Endothelial cell of umbilical vein (primary cell): ENCODE measurements at regions of chr14 and their contacts with region 1.

Region 1: DNA sequence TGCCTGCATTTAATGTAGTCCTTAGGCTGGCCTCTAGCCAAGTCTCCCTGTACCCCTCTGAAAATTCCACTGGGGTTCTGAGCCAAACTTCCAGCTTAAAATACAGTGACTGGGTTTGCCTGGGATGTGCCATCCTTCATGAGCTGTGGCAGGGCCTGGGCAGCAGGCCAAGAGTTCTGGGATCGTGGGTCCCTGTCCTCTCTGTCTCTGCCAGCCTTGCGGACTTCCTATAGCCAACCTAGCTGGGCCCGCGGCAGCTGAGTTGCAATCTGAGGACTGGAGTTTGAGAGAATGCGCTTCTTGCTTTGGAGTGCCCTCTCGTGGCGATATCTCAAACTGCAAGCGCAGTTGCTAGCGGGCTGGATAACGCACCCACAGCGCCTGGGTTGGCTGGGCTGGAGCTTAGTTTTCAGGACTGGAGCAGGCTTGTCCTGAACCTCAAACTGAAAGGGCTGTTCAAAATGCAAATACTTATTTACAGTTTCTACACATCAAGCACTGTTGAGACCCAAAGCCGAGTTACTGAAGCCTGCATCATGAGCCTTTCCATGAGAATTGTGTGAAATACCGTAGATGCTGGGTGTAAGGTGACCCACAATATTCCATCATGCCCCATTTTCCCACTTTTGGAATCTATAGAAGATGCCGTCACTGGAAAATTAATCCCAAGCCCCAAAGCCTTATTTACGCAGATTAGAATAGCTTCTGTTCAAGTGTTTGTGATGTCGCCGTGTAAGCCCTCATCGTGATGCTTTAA is 7.3 kb upstream of the IFI27L2 start:
- DNase-seq: peak; percentile 80
- H3K4me3 ChIP-seq: no peak overlapping the region
- H3K27ac ChIP-seq: no peak overlapping the region
- H3K4me1 ChIP-seq: no peaks in the 10 kb centered on the region
- H3K27me3 ChIP-seq: peaks cover 3 to 11% of the 10 kb centered on the region in 2 experiments
- CTCF ChIP-seq: peak; percentile 95 to 96
- POLR2A ChIP-seq: no peak

Region 2: DNA sequence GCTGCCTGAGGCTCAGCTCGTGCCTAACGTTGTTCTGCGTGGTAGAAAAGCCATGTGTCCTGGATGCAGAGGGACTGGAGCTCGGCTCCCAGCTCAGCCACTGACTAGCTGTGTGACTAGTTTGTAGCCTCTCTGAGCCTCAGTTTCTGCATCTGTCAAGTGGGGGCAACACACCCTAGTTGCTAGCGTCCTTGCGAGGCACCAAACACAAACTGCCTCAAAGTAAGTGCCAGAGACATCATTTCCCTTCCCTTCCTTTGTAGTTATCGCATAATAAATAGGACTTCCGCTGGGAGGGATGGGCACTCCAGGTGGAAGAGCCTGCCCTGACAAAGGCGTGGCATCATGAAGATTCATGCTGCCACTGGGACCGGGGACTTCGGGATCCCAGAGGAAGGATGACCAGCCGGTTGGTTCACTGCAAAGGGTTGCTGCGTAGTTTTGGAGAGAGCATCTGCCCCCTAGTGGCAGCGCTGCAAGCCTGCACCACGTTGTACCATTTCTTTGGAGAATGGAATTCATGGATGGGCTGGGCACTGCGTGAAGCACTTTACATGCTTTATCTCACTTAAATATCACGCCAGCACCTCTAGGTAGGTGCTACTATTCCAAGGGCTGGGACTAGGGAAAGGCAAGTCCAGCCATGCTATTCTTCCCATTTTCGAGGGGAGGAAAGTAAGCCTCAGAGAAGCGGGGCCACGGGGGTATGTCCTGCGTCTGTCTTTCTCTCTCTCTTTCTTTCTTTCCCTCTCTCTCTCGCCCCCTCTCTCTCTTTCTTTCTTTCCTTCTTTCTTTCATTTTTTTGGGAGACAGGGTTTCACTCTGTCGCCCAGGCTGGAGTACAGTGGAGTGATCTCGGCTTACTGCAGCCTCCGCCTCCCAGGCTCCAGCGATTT is 135.0 kb before region 1 on chr14:
- CTCF ChIA-PET with region 1: interaction called, 8 read pairs
- POLR2A ChIA-PET with region 1: no interaction called
- dilution Hi-C with region 1: no loop called
- intact Hi-C with region 1: loop called (anchors 1 kb)
- DNase-seq: peak; percentile 49
- H3K4me3 ChIP-seq: no peak overlapping the region
- H3K27ac ChIP-seq: no peak overlapping the region
- H3K4me1 ChIP-seq: no peaks in the 10 kb centered on the region
- H3K27me3 ChIP-seq: no peaks in the 10 kb centered on the region
- CTCF ChIP-seq: peak; percentile 93 to 96
- POLR2A ChIP-seq: no peak

Region 3: DNA sequence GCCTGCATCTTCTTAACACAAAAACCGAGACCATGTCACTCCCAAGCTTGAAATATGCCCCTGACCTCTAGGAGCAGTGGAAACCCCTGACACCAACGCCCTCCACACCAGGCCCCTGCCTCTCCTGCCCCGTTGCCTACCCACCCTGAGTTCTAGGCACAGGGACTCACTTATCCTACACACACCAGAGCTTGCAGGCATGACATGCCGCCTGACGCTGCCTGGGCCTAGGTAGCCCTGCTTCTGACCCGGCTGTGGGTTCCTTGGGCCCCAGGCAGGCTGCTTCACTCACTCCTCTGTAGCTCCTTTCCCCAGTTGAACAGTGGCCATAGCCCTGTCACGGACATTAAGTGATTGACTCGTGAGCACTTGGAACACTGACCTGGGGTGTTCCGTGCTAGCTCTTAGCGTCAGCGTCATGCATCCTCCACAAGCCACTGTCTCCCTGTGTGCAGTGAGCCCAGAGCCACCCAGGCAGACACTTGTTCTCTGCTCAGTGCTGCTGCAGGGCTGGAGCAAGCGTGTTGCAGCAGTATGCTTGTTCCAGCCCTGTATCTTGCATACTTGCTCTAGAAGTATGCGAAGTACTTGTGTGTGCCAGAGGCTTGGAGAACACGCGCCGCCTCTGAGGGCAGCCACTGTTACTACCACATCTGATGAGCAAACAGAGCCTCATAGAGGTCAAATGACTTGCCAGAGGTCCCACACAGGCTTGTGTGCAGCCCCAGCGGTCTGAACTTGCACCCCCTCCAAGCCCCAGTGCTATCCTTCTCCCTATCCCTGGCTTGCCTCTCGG is 95.0 kb before region 1 on chr14:
- CTCF ChIA-PET with region 1: interaction called, 347 read pairs
- POLR2A ChIA-PET with region 1: no interaction called
- dilution Hi-C with region 1: no loop called
- intact Hi-C with region 1: loop called (anchors 1 kb)
- DNase-seq: no peak
- H3K4me3 ChIP-seq: no peak overlapping the region
- H3K27ac ChIP-seq: no peak overlapping the region
- H3K4me1 ChIP-seq: no peaks in the 10 kb centered on the region
- H3K27me3 ChIP-seq: no peaks in the 10 kb centered on the region
- CTCF ChIP-seq: no peak
- POLR2A ChIP-seq: no peak

Region 4: GRCh38 chr14:94080471-94081289 is 56.1 kb before region 1 on chr14 and contains the start of gene DDX24:
- CTCF ChIA-PET with region 1: interaction called, 15 read pairs
- POLR2A ChIA-PET with region 1: interaction called, 4 read pairs
- dilution Hi-C with region 1: no loop called
- intact Hi-C with region 1: loop called (anchors 1 kb)
- DNase-seq: peak; percentile 97
- H3K4me3 ChIP-seq: peak within 1 kb of the TSS; percentile 67 to 88 (median 82)
- H3K27ac ChIP-seq: peak within 1 kb of the TSS; percentile 80
- H3K4me1 ChIP-seq: peaks cover 29% of the 10 kb centered on the region
- H3K27me3 ChIP-seq: no peaks in the 10 kb centered on the region
- CTCF ChIP-seq: no peak
- POLR2A ChIP-seq: peak; percentile 95
- total RNA-seq, gene DDX24: 132 and 141 TPM in 2 replicates

Region 5: GRCh38 chr14:94173885-94174603 is 37.3 kb after region 1 on chr14 and contains the start of gene PPP4R4:
- CTCF ChIA-PET with region 1: interaction called, 16 read pairs
- POLR2A ChIA-PET with region 1: no interaction called
- dilution Hi-C with region 1: no loop called
- intact Hi-C with region 1: no loop called
- DNase-seq: peak; percentile 64
- H3K4me3 ChIP-seq: peak within 1 kb of the TSS; percentile 8 to 39 (median 24)
- H3K27ac ChIP-seq: no peak within 1 kb of the TSS
- H3K4me1 ChIP-seq: peaks cover 3% of the 10 kb centered on the region
- H3K27me3 ChIP-seq: peaks cover 29 to 61% of the 10 kb centered on the region in 2 experiments
- CTCF ChIP-seq: no peak
- POLR2A ChIP-seq: no peak
- total RNA-seq, gene PPP4R4: not detected in 2 replicates

Region 6: DNA sequence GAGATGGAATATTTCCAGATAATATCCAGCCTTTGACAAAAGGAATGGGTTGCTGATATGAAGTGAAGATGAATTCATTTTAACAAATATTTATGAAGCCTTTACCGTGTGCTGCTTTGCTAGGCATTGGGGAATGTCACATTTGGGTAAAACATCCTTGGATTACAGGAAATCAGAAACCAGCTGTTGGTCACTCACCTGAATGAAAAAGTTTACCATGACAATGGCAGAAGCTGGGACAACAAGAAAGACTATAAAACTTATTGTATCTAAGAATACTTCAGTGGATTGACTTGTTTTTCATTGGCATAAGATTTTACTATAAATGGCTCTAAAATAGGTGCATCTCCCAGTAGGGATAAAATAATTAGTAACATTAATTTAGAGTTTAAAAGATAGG is 57.0 kb after region 1 on chr14:
- CTCF ChIA-PET with region 1: no interaction called
- POLR2A ChIA-PET with region 1: no interaction called
- dilution Hi-C with region 1: no loop called
- intact Hi-C with region 1: no loop called
- DNase-seq: no peak
- H3K4me3 ChIP-seq: no peak overlapping the region
- H3K27ac ChIP-seq: no peak overlapping the region
- H3K4me1 ChIP-seq: no peaks in the 10 kb centered on the region
- H3K27me3 ChIP-seq: peaks cover 0 to 2% of the 10 kb centered on the region in 2 experiments
- CTCF ChIP-seq: no peak
- POLR2A ChIP-seq: no peak

Region 7: DNA sequence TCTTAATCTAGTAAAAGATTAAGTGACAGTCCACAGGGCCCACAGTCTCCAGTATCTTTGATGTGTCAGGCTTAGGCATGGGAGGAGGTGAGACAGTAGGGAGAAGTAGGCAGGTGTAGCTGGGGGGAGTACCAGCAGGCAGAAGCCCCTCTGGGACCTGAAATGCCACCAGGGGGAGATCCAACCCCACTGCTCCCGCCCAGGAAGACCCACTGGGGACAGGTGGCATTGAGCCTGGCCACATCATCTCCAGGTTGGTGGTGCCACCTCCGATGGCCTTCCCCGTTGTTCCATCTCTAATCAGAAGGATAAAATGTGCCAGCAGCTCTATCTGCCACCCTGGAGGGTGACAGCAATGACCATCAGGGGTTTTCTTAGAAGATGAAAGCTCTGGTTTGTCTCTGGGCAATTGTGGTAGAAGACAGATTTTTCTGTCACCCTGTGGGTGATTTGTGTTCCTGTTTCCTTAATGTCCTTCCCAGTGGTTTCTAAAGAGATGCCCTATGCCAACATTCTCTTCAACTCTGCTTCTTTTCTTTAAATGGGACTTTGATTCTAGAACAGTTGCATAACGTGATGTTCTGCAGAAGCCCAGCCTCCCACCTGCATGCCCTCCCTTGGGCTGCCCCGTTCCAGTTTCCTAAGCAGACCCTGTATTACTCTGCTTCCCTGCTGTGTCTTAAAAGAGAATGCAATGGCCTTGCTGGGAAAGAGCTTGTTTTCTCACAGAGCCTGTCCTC is 384.8 kb after region 1 on chr14:
- CTCF ChIA-PET with region 1: no interaction called
- POLR2A ChIA-PET with region 1: no interaction called
- dilution Hi-C with region 1: no loop called
- intact Hi-C with region 1: no loop called
- DNase-seq: no peak
- H3K4me3 ChIP-seq: no peak overlapping the region
- H3K27ac ChIP-seq: no peak overlapping the region
- H3K4me1 ChIP-seq: no peaks in the 10 kb centered on the region
- H3K27me3 ChIP-seq: no peaks in the 10 kb centered on the region
- CTCF ChIP-seq: no peak
- POLR2A ChIP-seq: no peak